ENCODE measurements at regions of chr18 and their contacts with region 1.

Region 1: DNA sequence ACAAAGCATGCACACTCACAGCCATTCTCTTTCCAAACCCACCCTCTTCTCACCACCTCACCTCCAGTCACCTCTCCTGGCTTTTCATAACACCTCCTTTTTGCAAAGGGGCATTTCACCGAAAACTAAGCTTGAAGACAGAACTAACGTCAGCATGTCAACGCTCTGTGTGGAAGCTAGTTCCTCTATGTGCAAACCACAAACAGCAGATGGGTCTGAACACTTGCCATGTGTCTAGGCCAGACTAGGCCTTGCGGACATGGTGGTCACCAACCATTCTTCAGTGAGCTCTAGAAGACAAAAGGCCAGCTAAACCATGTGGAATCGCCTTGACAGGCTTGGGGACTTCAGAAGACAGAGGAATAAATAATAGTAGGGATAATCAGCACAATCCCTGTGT is 148.5 kb downstream of the TXNL1 start:
- DNase-seq: no peak
- ATAC-seq: peak in 2 of 8 donors; percentile 25 to 42
- H3K4me3 ChIP-seq: no peak overlapping the region
- H3K27ac ChIP-seq: no peak overlapping the region
- H3K4me1 ChIP-seq: peaks cover 0 to 7% (median 0%) of the 10 kb centered on the region in 9 donors
- H3K27me3 ChIP-seq: no peaks in the 10 kb centered on the region
- CTCF ChIP-seq: no peak

Region 2: DNA sequence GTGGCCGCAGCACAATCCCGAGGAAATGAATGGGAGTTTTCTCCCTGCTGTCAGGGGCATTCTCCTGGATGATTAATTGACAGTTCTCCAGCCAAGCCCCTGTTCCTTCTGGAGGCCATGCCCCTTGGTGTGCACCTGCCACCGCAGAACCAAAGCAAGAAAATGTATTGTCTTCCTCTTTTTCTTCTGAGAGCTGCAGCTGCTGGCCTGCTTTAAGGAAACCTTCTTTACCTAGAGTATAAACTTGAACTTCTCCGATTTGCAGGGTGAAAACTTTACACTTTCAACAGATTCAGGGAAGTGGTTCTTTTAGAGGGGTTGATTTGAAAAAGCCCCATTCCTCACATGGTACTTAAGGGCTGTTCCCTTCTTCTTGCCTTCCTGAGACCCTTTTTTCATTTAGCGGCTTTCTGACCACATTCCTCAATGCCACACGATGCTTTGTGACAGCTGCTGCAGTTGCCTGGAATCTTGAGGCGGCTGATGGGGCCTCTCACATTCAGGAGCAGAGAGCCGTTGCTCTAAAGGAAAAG is 254.3 kb before region 1 on chr18:
- intact Hi-C with region 1: no loop called
- DNase-seq: no peak
- ATAC-seq: no peak
- H3K4me3 ChIP-seq: no peak overlapping the region
- H3K27ac ChIP-seq: no peak overlapping the region
- H3K4me1 ChIP-seq: peaks cover 0 to 15% (median 4%) of the 10 kb centered on the region in 9 donors
- H3K27me3 ChIP-seq: no peaks in the 10 kb centered on the region
- CTCF ChIP-seq: no peak

Region 3: GRCh38 chr18:56541793-56542192 is 51.9 kb after region 1 on chr18:
- intact Hi-C with region 1: loop called in 1 of 10 experiments (anchors 10 kb)
- DNase-seq: no peak
- ATAC-seq: no peak
- H3K4me3 ChIP-seq: no peak overlapping the region
- H3K27ac ChIP-seq: peak overlapping the region in 1 of 10 donors; percentile 64
- H3K4me1 ChIP-seq: peaks cover 0 to 12% (median 0%) of the 10 kb centered on the region in 9 donors
- H3K27me3 ChIP-seq: no peaks in the 10 kb centered on the region
- CTCF ChIP-seq: no peak

Measured in heart right ventricle (tissue), 16 donors.